Heart right ventricle (tissue), 16 donors: ENCODE measurements at regions of chr20 and their contacts with region 1.

Region 1: GRCh38 chr20:41119546-41120235 is 17.7 kb upstream of the PLCG1 start:
- DNase-seq: no peak
- ATAC-seq: no peak
- H3K4me3 ChIP-seq: no peak overlapping the region
- H3K27ac ChIP-seq: no peak overlapping the region
- H3K4me1 ChIP-seq: no peaks in the 10 kb centered on the region
- H3K27me3 ChIP-seq: no peaks in the 10 kb centered on the region
- CTCF ChIP-seq: no peak

Region 2: DNA sequence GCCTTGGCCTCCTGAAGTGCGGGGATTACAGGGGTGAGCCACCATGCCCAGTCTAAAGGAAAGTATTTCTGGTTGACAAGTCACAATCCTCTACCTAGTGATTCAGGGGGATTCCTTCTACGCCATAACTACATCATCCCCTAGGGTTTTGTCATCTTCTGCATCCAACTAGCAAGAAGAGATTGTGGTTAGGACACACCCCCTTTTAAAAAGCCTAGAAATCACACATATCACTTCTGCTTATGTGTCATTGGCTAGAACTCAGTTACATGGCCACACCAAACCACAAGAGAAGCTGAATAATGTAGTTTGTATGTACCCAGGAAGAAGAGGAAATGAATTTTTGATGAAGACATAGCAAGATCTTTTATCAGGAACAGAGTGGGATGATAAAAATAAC is 513.2 kb after region 1 on chr20:
- intact Hi-C with region 1: loop called in 1 of 10 experiments (anchors 10 kb)
- DNase-seq: no peak
- ATAC-seq: no peak
- H3K4me3 ChIP-seq: no peak overlapping the region
- H3K27ac ChIP-seq: no peak overlapping the region
- H3K4me1 ChIP-seq: peaks cover 0 to 3% (median 0%) of the 10 kb centered on the region in 9 donors
- H3K27me3 ChIP-seq: peaks cover 0 to 20% (median 3%) of the 10 kb centered on the region in 7 donors
- CTCF ChIP-seq: no peak